ENCODE measurements at regions of chr17 and their contacts with region 1.

Region 1: DNA sequence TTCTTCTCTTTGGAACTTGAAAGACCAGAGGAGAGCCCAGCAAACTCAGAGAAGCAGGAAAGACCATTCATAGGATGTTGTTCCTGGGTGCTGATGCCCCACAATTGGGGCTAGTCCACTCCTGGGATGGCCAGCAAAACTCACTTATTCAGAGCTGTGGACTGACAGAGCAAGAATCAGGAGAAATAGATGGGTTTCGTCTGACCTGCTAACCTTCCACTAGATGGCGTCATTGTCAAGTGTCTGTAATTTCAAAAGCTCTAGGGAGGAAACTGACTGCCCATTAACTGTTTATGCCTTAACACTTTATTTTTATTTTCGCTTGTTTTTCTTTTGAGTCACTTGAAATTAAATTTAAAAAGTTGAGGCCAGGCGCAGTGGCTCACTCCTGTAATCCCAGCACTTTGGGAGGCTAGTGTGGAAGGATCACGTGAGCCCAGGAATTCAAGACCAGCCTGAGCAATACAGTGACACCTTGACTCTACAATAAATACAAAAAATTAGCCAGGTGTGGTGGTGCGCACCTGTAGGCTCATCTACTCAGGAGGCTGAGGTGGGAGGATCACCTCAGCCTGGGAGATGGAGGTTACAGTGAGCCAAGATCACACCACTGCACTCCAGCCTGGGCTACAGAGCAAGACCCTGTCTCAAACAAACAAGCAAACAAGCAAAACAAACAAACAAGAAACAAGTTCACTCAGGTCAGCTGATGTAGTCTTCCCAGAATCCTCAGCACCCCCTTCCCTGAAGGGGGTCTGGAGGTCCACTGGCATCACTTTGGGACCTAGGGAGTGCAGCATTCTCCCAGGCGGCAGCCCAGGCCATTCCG is 28.6 kb upstream of the MILR1 start:
- DNase-seq: no peak
- H3K4me3 ChIP-seq: no peak overlapping the region
- H3K27ac ChIP-seq: no peak overlapping the region
- H3K4me1 ChIP-seq: peaks cover 0 to 3% (median 0%) of the 10 kb centered on the region in 4 experiments; a peak in 1 of 7 replicates
- H3K27me3 ChIP-seq: no peaks in the 10 kb centered on the region
- CTCF ChIP-seq: peak in 2 of 3 experiments; percentile 61 to 78; a peak in 3 of 4 replicates
- EP300 ChIP-seq: no peak
- POLR2A ChIP-seq: no peak
- RAD21 ChIP-seq: peak; percentile 82

Region 2: GRCh38 chr17:64262417-64263260 is 157.7 kb before region 1 on chr17 and contains the start of gene TEX2:
- CTCF ChIA-PET with region 1: no interaction called
- POLR2A ChIA-PET with region 1: no interaction called
- DNase-seq: peak in 1 of 2 experiments; percentile 54
- H3K4me3 ChIP-seq: peak within 1 kb of the TSS; percentile 72 to 97 (median 84)
- H3K27ac ChIP-seq: peak within 1 kb of the TSS; percentile 94
- H3K4me1 ChIP-seq: peaks cover 1 to 5% (median 4%) of the 10 kb centered on the region in 4 experiments; a peak in 4 of 7 replicates
- H3K27me3 ChIP-seq: peaks cover 0 to 9% (median 8%) of the 10 kb centered on the region in 4 experiments; a peak in 4 of 7 replicates
- CTCF ChIP-seq: no peak
- EP300 ChIP-seq: no peak
- POLR2A ChIP-seq: no peak
- RAD21 ChIP-seq: no peak
- total RNA-seq, gene TEX2: 15.6 and 16.3 TPM in 2 replicates

Region 3: GRCh38 chr17:64291254-64291851 is 129.0 kb before region 1 on chr17:
- CTCF ChIA-PET with region 1: interaction called, 11 read pairs
- POLR2A ChIA-PET with region 1: no interaction called
- DNase-seq: no peak
- H3K4me3 ChIP-seq: no peak overlapping the region
- H3K27ac ChIP-seq: no peak overlapping the region
- H3K4me1 ChIP-seq: no peaks in the 10 kb centered on the region
- H3K27me3 ChIP-seq: no peaks in the 10 kb centered on the region
- CTCF ChIP-seq: peak in 2 of 3 experiments; percentile 47 to 69; a peak in 3 of 4 replicates
- EP300 ChIP-seq: no peak
- POLR2A ChIP-seq: no peak
- RAD21 ChIP-seq: peak; percentile 58 to 65

Region 4: GRCh38 chr17:64343853-64344637 is 76.3 kb before region 1 on chr17:
- CTCF ChIA-PET with region 1: interaction called, 15 read pairs
- POLR2A ChIA-PET with region 1: interaction called, 3 read pairs
- DNase-seq: no peak
- H3K4me3 ChIP-seq: no peak overlapping the region
- H3K27ac ChIP-seq: no peak overlapping the region
- H3K4me1 ChIP-seq: peaks cover 0 to 5% (median 2%) of the 10 kb centered on the region in 4 experiments; a peak in 3 of 7 replicates
- H3K27me3 ChIP-seq: peaks cover 0 to 3% (median under 1%) of the 10 kb centered on the region in 4 experiments; a peak in 4 of 7 replicates
- CTCF ChIP-seq: no peak
- EP300 ChIP-seq: no peak
- POLR2A ChIP-seq: no peak
- RAD21 ChIP-seq: no peak

Region 5: GRCh38 chr17:64369007-64369893 is 51.1 kb before region 1 on chr17:
- CTCF ChIA-PET with region 1: no interaction called
- POLR2A ChIA-PET with region 1: no interaction called
- DNase-seq: no peak
- H3K4me3 ChIP-seq: no peak overlapping the region
- H3K27ac ChIP-seq: no peak overlapping the region
- H3K4me1 ChIP-seq: no peaks in the 10 kb centered on the region
- H3K27me3 ChIP-seq: no peaks in the 10 kb centered on the region; a peak in 1 of 7 replicates
- CTCF ChIP-seq: no peak
- EP300 ChIP-seq: no peak
- POLR2A ChIP-seq: no peak
- RAD21 ChIP-seq: no peak

Region 6: GRCh38 chr17:64448665-64449512 is 28.5 kb after region 1 on chr17 and contains the start of gene MILR1:
- CTCF ChIA-PET with region 1: interaction called, 12 read pairs
- POLR2A ChIA-PET with region 1: no interaction called
- DNase-seq: no peak
- H3K4me3 ChIP-seq: no peak within 1 kb of the TSS
- H3K27ac ChIP-seq: no peak within 1 kb of the TSS
- H3K4me1 ChIP-seq: no peaks in the 10 kb centered on the region
- H3K27me3 ChIP-seq: no peaks in the 10 kb centered on the region
- CTCF ChIP-seq: no peak
- EP300 ChIP-seq: no peak
- POLR2A ChIP-seq: no peak
- RAD21 ChIP-seq: no peak
- total RNA-seq, gene MILR1: not detected in 2 replicates

Region 7: DNA sequence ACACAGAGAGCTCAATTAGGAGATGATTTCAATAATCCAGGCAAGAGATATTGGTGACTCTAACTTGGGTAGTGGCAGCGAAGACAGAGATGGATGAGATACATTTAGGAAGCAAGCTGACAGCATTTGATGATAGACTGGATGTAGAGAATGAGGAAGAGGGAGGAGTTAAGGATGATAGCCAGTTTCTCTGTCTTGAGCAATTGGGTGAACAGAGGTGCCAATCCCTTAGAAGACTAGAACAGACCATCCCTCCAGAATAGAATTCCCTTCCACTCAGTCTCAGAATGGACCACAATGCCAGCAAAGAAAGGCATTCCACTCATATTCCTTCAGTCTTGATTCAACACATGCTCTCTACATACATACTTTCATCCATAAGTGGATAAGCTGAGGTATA is 59.3 kb after region 1 on chr17:
- CTCF ChIA-PET with region 1: interaction called, 17 read pairs
- POLR2A ChIA-PET with region 1: no interaction called
- DNase-seq: no peak
- H3K4me3 ChIP-seq: no peak overlapping the region
- H3K27ac ChIP-seq: no peak overlapping the region
- H3K4me1 ChIP-seq: no peaks in the 10 kb centered on the region
- H3K27me3 ChIP-seq: no peaks in the 10 kb centered on the region
- CTCF ChIP-seq: no peak
- EP300 ChIP-seq: no peak
- POLR2A ChIP-seq: no peak
- RAD21 ChIP-seq: no peak

Region 8: DNA sequence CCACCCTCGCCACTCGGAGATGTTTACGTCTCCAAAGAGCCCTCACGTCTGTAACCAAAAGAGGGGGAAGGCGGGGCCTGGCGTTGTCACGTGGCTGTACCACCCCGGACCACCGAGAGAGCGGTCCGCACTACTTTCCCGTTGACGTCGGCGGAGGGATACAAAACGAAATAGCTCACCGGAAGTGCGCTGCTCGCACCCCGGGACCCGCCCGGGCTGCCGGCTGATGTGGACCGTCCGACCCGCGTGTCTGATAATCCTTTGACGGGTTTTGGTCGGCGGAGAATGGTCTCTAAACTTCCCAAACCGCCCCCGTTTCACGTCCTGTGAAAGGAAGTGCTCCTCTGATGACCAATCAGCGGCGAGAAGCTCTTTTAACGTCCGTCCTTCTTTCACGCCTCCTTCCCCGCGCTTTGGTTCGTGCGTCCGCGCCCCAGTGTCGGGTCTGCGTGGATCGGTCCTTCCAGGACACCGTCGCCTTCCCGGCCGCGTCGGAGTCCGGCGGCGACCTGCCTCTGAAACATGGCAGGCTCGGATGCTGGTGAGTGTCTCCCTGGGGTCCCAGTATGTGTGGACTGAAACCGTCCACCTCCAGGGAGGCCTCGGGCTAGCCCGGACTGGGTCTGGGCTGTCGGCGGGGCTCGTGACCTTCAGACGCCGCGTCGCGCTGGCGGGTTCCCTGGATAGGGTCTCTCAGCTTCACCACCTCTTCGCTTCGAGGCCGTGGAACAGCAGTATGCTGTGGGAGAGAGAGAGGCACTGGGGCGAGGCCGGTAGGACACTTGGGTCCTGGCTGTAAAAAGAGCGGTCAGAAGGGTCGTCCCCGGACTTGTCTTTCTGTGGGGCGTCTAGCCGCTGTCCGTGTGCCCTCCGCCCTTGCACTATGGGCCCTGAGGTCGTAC is 86.5 kb after region 1 on chr17 and contains the start of gene CEP95:
- CTCF ChIA-PET with region 1: interaction called, 8 read pairs
- POLR2A ChIA-PET with region 1: interaction called, 16 read pairs
- DNase-seq: peak in 1 of 2 experiments; percentile 95
- H3K4me3 ChIP-seq: peak within 1 kb of the TSS; percentile 95 to 99 (median 98)
- H3K27ac ChIP-seq: peak within 1 kb of the TSS; percentile 99
- H3K4me1 ChIP-seq: peaks cover 0 to 11% (median 2%) of the 10 kb centered on the region in 4 experiments; a peak in 5 of 7 replicates
- H3K27me3 ChIP-seq: no peaks in the 10 kb centered on the region
- CTCF ChIP-seq: no peak; a peak in 1 of 4 replicates
- EP300 ChIP-seq: peak; percentile 34 to 85
- POLR2A ChIP-seq: no peak; a peak in 2 of 3 replicates
- RAD21 ChIP-seq: peak in 1 of 2 experiments; percentile 2; a peak in 1 of 4 replicates
- total RNA-seq, gene CEP95: 50.8 and 51.5 TPM in 2 replicates

Region 9: GRCh38 chr17:64599187-64599676 is 178.9 kb after region 1 on chr17:
- CTCF ChIA-PET with region 1: no interaction called
- POLR2A ChIA-PET with region 1: no interaction called
- DNase-seq: no peak
- H3K4me3 ChIP-seq: no peak overlapping the region
- H3K27ac ChIP-seq: no peak overlapping the region
- H3K4me1 ChIP-seq: no peaks in the 10 kb centered on the region
- H3K27me3 ChIP-seq: no peaks in the 10 kb centered on the region
- CTCF ChIP-seq: no peak
- EP300 ChIP-seq: no peak
- POLR2A ChIP-seq: no peak
- RAD21 ChIP-seq: no peak